K562 (cell line): ENCODE measurements at regions of chr10 and their contacts with region 1.

Region 1: DNA sequence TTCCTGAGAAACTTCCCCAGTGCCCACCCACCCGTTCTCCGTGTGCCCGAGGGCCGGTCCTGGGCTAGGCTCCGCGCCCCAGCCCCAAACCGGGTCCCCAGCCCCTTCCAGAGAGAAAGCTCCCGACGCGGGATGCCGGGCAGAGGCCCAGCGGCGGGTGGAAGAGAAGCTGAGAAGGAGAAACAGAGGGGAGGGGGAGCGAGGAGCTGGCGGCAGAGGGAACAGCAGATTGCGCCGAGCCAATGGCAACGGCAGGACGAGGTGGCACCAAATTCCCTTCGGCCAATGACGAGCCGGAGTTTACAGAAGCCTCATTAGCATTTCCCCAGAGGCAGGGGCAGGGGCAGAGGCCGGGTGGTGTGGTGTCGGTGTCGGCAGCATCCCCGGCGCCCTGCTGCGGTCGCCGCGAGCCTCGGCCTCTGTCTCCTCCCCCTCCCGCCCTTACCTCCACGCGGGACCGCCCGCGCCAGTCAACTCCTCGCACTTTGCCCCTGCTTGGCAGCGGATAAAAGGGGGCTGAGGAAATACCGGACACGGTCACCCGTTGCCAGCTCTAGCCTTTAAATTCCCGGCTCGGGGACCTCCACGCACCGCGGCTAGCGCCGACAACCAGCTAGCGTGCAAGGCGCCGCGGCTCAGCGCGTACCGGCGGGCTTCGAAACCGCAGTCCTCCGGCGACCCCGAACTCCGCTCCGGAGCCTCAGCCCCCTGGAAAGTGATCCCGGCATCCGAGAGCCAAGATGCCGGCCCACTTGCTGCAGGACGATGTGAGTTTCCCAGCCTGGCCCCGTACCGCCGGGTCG is at the start of gene SCD:
- DNase-seq: peak; percentile 83 to 94 (median 88)
- ATAC-seq: peak; percentile 94
- H3K4me3 ChIP-seq: peak within 1 kb of the TSS; percentile 93
- H3K27ac ChIP-seq: peak within 1 kb of the TSS; percentile 82
- H3K4me1 ChIP-seq: peaks cover 23 to 37% of the 10 kb centered on the region in 2 experiments; a peak in 4 of 5 replicates
- H3K27me3 ChIP-seq: no peaks in the 10 kb centered on the region
- CTCF ChIP-seq: no peak
- EP300 ChIP-seq: no peak
- POLR2A ChIP-seq: peak; percentile 75
- RAD21 ChIP-seq: no peak
- polyA plus RNA-seq, gene SCD: 188 to 258 TPM

Region 2: DNA sequence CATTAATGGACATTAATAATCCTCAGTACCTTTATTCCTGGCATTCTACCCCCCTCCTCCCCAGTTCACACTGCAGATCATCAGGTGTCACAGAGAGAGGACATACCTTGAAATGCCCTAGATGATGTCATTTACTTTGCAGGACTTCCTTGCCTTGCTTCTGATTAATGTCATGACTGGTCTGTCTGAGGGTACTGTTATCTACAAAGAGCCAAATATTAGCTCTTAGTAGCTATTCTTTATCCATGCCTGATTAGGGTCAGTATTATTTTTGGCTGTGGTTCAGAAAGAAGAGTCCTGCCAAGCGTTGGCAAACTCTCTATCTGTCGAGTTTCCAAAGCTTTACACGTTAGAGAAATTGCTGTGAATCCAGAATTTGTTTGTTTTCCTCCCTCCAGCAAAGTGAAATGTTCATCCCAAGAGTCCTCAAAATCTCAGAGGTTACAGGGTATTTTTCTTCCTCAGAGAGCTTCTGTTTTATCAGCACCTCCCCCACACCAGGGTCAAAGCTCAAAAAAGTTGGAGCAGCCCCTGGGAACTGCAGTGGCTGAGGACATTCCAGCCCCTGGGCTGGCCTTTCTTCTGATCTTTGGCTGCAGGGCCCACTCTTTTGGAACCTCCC is 12.7 kb after region 1 on chr10:
- CTCF ChIA-PET with region 1: no interaction called
- POLR2A ChIA-PET with region 1: interaction called, 19 read pairs
- in situ Hi-C with region 1: no loop called
- intact Hi-C with region 1: no loop called
- DNase-seq: peak in 1 of 4 experiments; percentile 17
- ATAC-seq: no peak
- H3K4me3 ChIP-seq: no peak overlapping the region
- H3K27ac ChIP-seq: peak overlapping the region; percentile 59
- H3K4me1 ChIP-seq: peaks cover 17 to 24% of the 10 kb centered on the region in 2 experiments
- H3K27me3 ChIP-seq: no peaks in the 10 kb centered on the region
- CTCF ChIP-seq: no peak
- EP300 ChIP-seq: no peak
- POLR2A ChIP-seq: 0 out of 2 replicates have a peak, but pooled peaks have one; percentile 0
- RAD21 ChIP-seq: no peak

Region 3: DNA sequence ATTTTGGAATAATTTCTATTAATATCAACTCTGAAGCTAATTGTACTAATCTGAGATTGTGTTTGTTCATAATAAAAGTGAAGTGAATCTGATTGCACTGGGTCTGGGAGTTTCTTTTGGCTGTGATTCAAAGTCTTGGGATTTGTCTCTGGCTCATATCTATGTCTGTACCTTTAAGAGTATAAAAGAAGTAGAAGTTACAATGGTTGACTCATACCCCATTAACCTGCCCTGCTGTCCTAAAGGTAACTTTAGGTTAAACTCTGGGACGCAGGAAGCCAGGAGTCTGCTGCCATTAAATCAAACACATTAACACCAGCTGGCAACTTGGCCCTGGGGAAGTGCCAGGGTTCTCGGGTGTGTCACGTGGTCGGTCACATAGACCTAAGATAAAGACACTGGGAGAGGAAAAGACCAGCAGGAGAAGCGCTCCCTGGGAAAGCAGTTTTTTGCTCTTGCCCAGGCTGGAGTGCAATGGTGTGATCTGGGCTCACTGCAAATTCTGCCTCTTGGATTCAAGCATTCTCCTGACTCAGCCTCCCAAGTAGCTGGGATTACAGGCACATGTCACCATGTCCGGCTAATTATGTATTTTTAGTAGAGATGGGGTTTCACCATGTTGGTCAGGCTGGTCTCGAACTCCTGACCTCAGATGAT is 17.9 kb after region 1 on chr10:
- CTCF ChIA-PET with region 1: no interaction called
- POLR2A ChIA-PET with region 1: interaction called, 19 read pairs
- in situ Hi-C with region 1: no loop called
- intact Hi-C with region 1: no loop called
- DNase-seq: peak in 2 of 4 experiments; percentile 17 to 52
- ATAC-seq: peak; percentile 74
- H3K4me3 ChIP-seq: no peak overlapping the region
- H3K27ac ChIP-seq: peak overlapping the region; percentile 44; the same call in 1 of the 3 replicates
- H3K4me1 ChIP-seq: peaks cover 3 to 11% of the 10 kb centered on the region in 2 experiments
- H3K27me3 ChIP-seq: no peaks in the 10 kb centered on the region
- CTCF ChIP-seq: no peak
- EP300 ChIP-seq: no peak
- POLR2A ChIP-seq: no peak; the same call in 1 of the 2 replicates
- RAD21 ChIP-seq: 0 out of 4 replicates have a peak, but pooled peaks of 1 of the 2 experiments have one; percentile 3

Region 4: GRCh38 chr10:100373298-100374136 is 26.6 kb after region 1 on chr10:
- CTCF ChIA-PET with region 1: interaction called, 5 read pairs
- POLR2A ChIA-PET with region 1: interaction called, 16 read pairs
- in situ Hi-C with region 1: no loop called
- intact Hi-C with region 1: loop called (anchors 1 kb)
- DNase-seq: peak; percentile 91 to 97 (median 94)
- ATAC-seq: peak; percentile 88
- H3K4me3 ChIP-seq: peak overlapping the region; percentile 62
- H3K27ac ChIP-seq: peak overlapping the region; percentile 100
- H3K4me1 ChIP-seq: peaks cover 25% of the 10 kb centered on the region in 2 experiments
- H3K27me3 ChIP-seq: no peaks in the 10 kb centered on the region
- CTCF ChIP-seq: no peak
- EP300 ChIP-seq: peak; percentile 85
- POLR2A ChIP-seq: peak; percentile 88
- RAD21 ChIP-seq: 0 out of 4 replicates have a peak, but pooled peaks of 1 of the 2 experiments have one; percentile 4

Region 5: GRCh38 chr10:101018600-101019439 is 671.9 kb after region 1 on chr10:
- CTCF ChIA-PET with region 1: no interaction called
- POLR2A ChIA-PET with region 1: no interaction called
- in situ Hi-C with region 1: no loop called
- intact Hi-C with region 1: no loop called
- DNase-seq: peak; percentile 76 to 87 (median 82)
- ATAC-seq: peak; percentile 97
- H3K4me3 ChIP-seq: no peak overlapping the region
- H3K27ac ChIP-seq: no peak overlapping the region
- H3K4me1 ChIP-seq: peaks cover 0 to 13% of the 10 kb centered on the region in 2 experiments; a peak in 3 of 5 replicates
- H3K27me3 ChIP-seq: no peaks in the 10 kb centered on the region
- CTCF ChIP-seq: peak; percentile 73 to 92 (median 78)
- EP300 ChIP-seq: no peak
- POLR2A ChIP-seq: no peak
- RAD21 ChIP-seq: peak; percentile 66 to 75